ENCODE measurements at regions of chr2 and their contacts with region 1.

Region 1: GRCh38 chr2:113138428-113139322 is 11.3 kb downstream of the IL1RN start:
- DNase-seq: peak; percentile 82 to 91 (median 82)
- H3K4me3 ChIP-seq: peak overlapping the region in 3 of 7 experiments; percentile 34 to 57 (median 35)
- H3K27ac ChIP-seq: no peak overlapping the region
- H3K4me1 ChIP-seq: peaks cover 0 to 13% (median 1%) of the 10 kb centered on the region in 4 experiments
- H3K27me3 ChIP-seq: no peaks in the 10 kb centered on the region

Region 2: DNA sequence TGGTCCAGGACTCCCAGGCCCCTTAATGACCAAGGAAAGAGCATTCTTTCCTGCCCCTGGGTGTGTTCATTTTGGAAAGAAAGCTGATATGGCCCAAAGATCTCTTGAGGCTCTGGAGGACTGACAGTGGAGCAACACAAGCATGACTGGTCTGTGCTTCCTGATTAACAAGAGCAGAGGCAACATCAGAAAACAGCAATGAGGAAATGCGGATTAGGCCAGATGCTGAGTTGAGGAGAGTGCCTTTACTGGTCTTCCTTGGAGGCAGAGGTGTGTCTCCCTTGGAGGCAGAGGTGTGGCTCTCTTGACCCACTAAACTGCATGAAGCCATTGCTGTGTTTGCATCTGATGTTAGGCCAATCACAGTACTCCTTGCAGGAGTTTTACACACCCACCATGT is 105.9 kb before region 1 on chr2:
- CTCF ChIA-PET with region 1: no interaction called
- POLR2A ChIA-PET with region 1: no interaction called
- DNase-seq: no peak
- H3K4me3 ChIP-seq: no peak overlapping the region
- H3K27ac ChIP-seq: no peak overlapping the region
- H3K4me1 ChIP-seq: no peaks in the 10 kb centered on the region
- H3K27me3 ChIP-seq: peaks cover 0 to 11% (median 1%) of the 10 kb centered on the region in 5 experiments

Region 3: DNA sequence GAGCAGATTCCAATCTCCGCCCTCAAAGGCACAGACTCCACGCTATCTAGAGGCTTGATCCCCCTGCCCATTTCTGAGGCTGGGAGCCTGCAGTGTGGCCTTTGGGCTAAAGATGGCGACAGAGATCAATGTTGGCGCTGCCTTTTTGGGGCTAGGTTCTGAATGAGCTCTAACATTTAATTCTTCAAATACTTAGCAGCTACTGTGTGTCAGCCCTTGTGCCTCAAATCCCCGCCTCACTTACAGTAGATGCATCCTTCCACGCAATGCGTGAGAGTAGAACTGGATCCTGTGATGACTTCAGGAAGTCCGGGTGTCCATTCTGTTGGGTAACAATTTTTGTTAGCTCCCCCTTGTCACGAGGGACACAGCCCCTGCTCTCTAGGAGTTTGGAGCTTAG is 58.5 kb before region 1 on chr2:
- CTCF ChIA-PET with region 1: interaction called, 127 read pairs
- POLR2A ChIA-PET with region 1: interaction called, 3 read pairs
- DNase-seq: peak; percentile 21 to 55 (median 48)
- H3K4me3 ChIP-seq: no peak overlapping the region
- H3K27ac ChIP-seq: no peak overlapping the region
- H3K4me1 ChIP-seq: peaks cover 0 to 2% (median 0%) of the 10 kb centered on the region in 4 experiments
- H3K27me3 ChIP-seq: no peaks in the 10 kb centered on the region

Region 4: DNA sequence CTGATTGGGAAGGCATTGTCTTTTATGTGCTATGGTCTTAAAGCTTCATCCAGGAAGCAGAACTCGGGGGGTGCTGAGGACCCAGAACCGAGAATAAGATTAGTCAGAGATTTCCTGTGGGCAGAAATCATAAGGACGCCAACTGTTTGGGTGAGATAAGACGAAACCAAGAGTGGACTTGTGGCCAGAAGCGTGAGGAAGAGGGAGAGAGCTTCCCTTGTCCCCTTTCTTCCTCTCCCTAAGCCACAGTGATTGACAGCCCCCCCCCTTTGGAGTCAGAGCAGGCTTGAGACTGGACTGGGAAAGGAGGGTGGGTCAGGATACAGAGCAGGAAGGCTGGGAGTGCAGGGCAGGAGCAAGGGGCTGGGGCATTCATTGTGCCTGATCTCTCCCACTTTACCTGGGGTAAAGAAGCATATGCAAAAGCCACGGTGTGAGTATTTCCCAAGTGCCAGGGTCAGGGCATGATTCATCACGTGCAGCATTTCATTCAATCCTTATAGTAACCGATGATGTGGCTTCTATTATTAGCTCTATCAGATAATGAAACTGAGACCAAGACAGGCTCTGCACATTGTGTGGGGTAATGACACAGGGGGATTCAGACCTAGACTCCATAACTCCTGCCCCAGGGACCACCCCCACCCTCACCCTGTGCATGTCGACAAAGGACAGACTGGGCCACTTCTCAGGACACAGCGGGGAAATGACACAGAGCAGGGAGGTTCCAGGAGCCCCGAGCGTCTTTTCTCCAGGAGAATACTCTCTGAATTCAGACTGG is 14.3 kb before region 1 on chr2:
- CTCF ChIA-PET with region 1: interaction called, 68 read pairs
- POLR2A ChIA-PET with region 1: no interaction called
- DNase-seq: peak; percentile 86 to 98 (median 95)
- H3K4me3 ChIP-seq: peak overlapping the region in 4 of 7 experiments; percentile 25 to 61 (median 46)
- H3K27ac ChIP-seq: no peak overlapping the region
- H3K4me1 ChIP-seq: peaks cover 2 to 44% (median 20%) of the 10 kb centered on the region in 4 experiments
- H3K27me3 ChIP-seq: no peaks in the 10 kb centered on the region

Region 5: DNA sequence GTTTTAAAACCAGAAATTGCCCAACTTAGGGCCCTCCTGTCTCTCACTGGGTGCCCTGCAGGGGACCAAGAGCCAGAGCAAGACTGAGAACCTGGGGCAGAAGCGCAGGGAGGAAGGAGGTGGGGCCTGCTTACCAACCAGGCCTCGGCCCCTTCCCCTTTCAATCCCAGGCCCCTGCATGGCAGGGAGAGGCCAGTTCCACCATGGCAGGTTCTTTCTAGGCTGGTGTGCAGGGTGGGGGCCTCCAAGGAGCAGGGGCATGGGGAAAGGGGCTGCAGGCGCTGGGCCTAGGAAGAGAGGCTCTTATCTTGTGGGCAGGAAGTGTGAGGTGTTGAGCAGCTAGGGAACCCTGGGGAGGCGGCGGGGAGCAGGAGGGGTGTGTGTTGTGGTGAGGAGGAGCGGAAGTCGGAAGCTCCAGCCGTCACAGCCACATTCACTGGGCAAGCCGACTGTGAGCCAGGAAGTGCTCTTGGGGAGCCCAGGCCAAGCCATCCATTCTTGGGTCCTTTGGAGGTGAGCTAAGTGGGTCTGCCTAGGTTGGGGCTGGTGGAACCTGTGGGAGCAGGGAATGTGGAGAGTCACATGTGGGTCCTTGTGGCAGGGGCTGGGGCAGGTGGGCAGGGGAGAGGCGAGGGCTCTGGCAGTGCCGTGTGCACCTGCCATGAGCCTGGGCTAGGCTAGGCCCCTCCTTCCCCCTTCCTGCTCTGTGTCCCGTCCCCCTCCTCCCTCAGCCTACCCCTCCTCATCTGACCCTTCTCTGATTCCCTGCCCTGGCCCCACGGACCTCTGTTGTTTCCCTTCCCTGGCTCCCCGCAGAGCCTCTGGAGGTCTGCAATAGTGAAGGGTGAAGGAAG is 35.1 kb after region 1 on chr2 and contains the start of gene PSD4:
- CTCF ChIA-PET with region 1: interaction called, 93 read pairs
- POLR2A ChIA-PET with region 1: no interaction called
- DNase-seq: peak; percentile 87 to 95 (median 93)
- H3K4me3 ChIP-seq: peak within 1 kb of the TSS; percentile 42 to 83 (median 75)
- H3K27ac ChIP-seq: peak within 1 kb of the TSS; percentile 59 to 80
- H3K4me1 ChIP-seq: peaks cover 11 to 55% (median 48%) of the 10 kb centered on the region in 4 experiments
- H3K27me3 ChIP-seq: no peaks in the 10 kb centered on the region

Region 6: GRCh38 chr2:113203901-113204519 is 65.3 kb after region 1 on chr2:
- CTCF ChIA-PET with region 1: interaction called, 286 read pairs
- POLR2A ChIA-PET with region 1: no interaction called
- DNase-seq: peak; percentile 72 to 83 (median 78)
- H3K4me3 ChIP-seq: no peak overlapping the region
- H3K27ac ChIP-seq: no peak overlapping the region
- H3K4me1 ChIP-seq: peaks cover 0 to 9% (median 7%) of the 10 kb centered on the region in 4 experiments
- H3K27me3 ChIP-seq: no peaks in the 10 kb centered on the region

Region 7: GRCh38 chr2:113370478-113371091 is 231.9 kb after region 1 on chr2:
- CTCF ChIA-PET with region 1: interaction called, 26 read pairs
- POLR2A ChIA-PET with region 1: no interaction called
- DNase-seq: peak; percentile 60 to 84 (median 84)
- H3K4me3 ChIP-seq: no peak overlapping the region
- H3K27ac ChIP-seq: no peak overlapping the region
- H3K4me1 ChIP-seq: peaks cover 2 to 20% (median 18%) of the 10 kb centered on the region in 4 experiments
- H3K27me3 ChIP-seq: no peaks in the 10 kb centered on the region

Region 8: DNA sequence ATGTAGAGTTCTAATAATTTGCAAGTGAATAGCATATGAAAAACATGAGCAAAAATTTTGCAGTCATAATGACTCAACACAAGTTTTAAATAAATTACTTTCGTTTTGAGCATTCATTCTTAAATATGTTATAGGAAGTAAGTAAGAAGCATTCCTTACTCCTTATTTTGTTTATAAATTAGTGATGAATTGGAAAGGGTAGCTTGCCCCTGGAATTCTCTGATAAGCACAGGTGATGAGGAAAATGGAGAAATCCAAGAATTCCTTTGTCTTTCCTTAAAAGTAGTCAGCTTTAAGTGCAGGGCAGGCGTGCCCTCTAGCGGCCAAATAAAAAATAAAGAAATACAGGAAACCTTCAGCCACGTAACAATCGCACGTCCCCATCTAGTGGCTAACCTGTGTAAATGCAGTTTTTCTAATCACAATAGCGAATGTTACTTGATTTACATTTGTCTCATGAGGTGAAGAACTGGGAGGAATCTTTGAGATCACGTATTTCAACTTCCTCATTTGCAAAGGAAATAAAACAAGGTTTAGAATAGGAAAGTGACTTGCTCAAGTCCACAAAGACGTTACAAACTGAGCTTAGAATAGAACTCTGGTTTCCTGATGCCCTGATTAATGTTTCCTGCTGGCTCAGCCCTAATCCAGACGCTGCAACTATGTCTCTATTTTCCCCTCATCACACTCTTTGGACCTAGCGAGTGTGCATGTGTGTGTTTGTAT is 251.6 kb after region 1 on chr2:
- CTCF ChIA-PET with region 1: interaction called, 16 read pairs
- POLR2A ChIA-PET with region 1: no interaction called
- DNase-seq: peak; percentile 91 to 98 (median 95)
- H3K4me3 ChIP-seq: peak overlapping the region in 6 of 7 experiments; percentile 47 to 76 (median 64)
- H3K27ac ChIP-seq: peak overlapping the region; percentile 74 to 87
- H3K4me1 ChIP-seq: peaks cover 0 to 11% (median 8%) of the 10 kb centered on the region in 4 experiments
- H3K27me3 ChIP-seq: no peaks in the 10 kb centered on the region